ENCODE measurements at regions of chr10 and their contacts with region 1.

Region 1: GRCh38 chr10:6586501-6586900 is 6.4 kb upstream of the PRKCQ start:
- DNase-seq: no peak
- ATAC-seq: peak; percentile 23
- H3K4me3 Mint-ChIP-seq: peak overlapping the region; percentile 96
- H3K27ac Mint-ChIP-seq: peak overlapping the region; percentile 97
- H3K4me1 Mint-ChIP-seq: peaks cover 68% of the 10 kb centered on the region
- H3K27me3 Mint-ChIP-seq: no peaks in the 10 kb centered on the region

Region 2: GRCh38 chr10:6601246-6601805 is 14.8 kb after region 1 on chr10:
- POLR2A ChIA-PET with region 1: interaction called, 382 read pairs
- DNase-seq: no peak
- ATAC-seq: no peak
- H3K4me3 Mint-ChIP-seq: peak overlapping the region; percentile 71
- H3K27ac Mint-ChIP-seq: peak overlapping the region; percentile 91
- H3K4me1 Mint-ChIP-seq: peaks cover 63% of the 10 kb centered on the region
- H3K27me3 Mint-ChIP-seq: no peaks in the 10 kb centered on the region

Measured in activated naive CD8-positive, alpha-beta T cell treated with anti-CD3 and anti-CD28 coated beads, Interleukin-2, amount 10 ng/mL, durations not matched to agents 7 days and 5 days (primary cell).